MCF 10A (cell line): ENCODE measurements at regions of chr19 and their contacts with region 1.

Region 1: GRCh38 chr19:29844891-29845572 is 33.2 kb downstream of the CCNE1 start:
- DNase-seq: peak; percentile 93
- H3K4me3 Mint-ChIP-seq: peak overlapping the region; percentile 94
- H3K27ac Mint-ChIP-seq: peak overlapping the region; percentile 94
- H3K4me1 Mint-ChIP-seq: peaks cover 9% of the 10 kb centered on the region
- H3K27me3 Mint-ChIP-seq: peaks cover 20% of the 10 kb centered on the region
- CTCF ChIP-seq: no peak

Region 2: GRCh38 chr19:29811125-29812079 is 33.6 kb before region 1 on chr19 and contains the start of gene CCNE1:
- CTCF ChIA-PET with region 1: no interaction called
- POLR2A ChIA-PET with region 1: interaction called, 9 read pairs
- intact Hi-C with region 1: loop called (anchors 1 kb)
- DNase-seq: peak; percentile 91
- H3K4me3 Mint-ChIP-seq: peak within 1 kb of the TSS; percentile 77
- H3K27ac Mint-ChIP-seq: peak within 1 kb of the TSS; percentile 68
- H3K4me1 Mint-ChIP-seq: peaks cover 11% of the 10 kb centered on the region
- H3K27me3 Mint-ChIP-seq: no peaks in the 10 kb centered on the region
- CTCF ChIP-seq: no peak
- total RNA-seq, gene CCNE1: 3.0 and 3.5 TPM in 2 replicates

Region 3: GRCh38 chr19:29858000-29858596 is 13.1 kb after region 1 on chr19:
- CTCF ChIA-PET with region 1: interaction called, 15 read pairs
- POLR2A ChIA-PET with region 1: interaction called, 3 read pairs
- intact Hi-C with region 1: no loop called
- DNase-seq: peak; percentile 38
- H3K4me3 Mint-ChIP-seq: no peak overlapping the region
- H3K27ac Mint-ChIP-seq: no peak overlapping the region
- H3K4me1 Mint-ChIP-seq: no peaks in the 10 kb centered on the region
- H3K27me3 Mint-ChIP-seq: peaks cover 15% of the 10 kb centered on the region
- CTCF ChIP-seq: peak; percentile 52

Region 4: DNA sequence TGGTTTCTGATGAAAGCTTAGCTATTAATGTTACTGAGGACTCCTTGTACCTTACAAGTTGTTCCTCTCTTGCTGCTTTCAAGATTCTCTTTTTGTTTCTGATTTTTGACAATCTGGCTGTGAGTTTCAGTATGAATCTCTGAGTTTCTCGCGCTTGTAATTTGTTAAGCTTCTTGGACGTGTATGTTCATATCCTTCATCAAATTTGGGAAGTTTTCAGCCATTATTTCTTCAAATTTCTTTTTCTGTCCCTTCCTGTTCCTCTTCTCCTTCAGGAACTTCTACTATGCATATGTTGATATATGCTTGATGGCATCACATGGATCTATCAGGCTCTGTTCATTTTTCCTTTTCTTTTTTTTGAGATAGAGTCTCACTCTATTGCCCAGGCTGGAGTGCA is 91.4 kb after region 1 on chr19:
- CTCF ChIA-PET with region 1: no interaction called
- POLR2A ChIA-PET with region 1: no interaction called
- intact Hi-C with region 1: no loop called
- DNase-seq: no peak
- H3K4me3 Mint-ChIP-seq: no peak overlapping the region
- H3K27ac Mint-ChIP-seq: no peak overlapping the region
- H3K4me1 Mint-ChIP-seq: no peaks in the 10 kb centered on the region
- H3K27me3 Mint-ChIP-seq: no peaks in the 10 kb centered on the region
- CTCF ChIP-seq: no peak